Sciatic nerve (tissue), 2 donors: ENCODE measurements at regions of chr20 and their contacts with region 1.

Region 1: GRCh38 chr20:41173161-41173721 is 35.9 kb downstream of the PLCG1 start:
- DNase-seq: peak; percentile 92
- ATAC-seq: peak; percentile 94

Region 2: DNA sequence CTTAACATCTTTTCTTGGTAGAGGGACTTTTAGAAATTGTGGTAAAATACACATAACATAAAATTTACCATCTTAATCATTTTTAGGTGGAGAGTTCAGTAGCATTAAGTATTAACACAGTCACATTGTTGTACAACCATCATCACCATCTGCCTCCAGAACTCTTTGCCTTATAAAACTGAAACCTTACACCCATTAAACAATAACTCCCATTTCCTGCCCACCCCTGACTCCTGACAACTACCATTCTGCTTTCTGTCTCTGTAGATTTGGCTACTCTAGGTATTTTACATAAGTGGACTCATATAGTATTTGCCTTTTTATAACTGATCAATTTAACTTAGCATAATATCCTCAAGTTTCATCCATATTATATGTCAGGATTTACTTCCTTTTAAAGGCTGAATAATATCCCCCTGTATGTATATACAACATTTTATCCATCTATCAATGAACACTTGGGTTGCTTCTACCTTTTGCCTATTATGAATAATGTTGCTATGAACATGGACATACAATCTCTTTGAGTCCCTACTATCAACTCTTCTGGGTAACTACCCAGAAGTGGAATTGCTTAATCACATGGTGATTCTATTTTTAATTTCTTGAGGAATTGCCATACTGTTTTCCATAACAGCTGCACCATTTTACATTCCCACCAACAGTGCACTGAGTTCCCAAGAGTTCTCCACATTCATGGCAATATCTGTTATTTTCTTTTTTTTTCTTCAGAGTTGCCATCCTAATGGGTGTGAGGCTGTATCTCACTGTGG is 55.8 kb after region 1 on chr20:
- intact Hi-C with region 1: loop called (anchors 10 kb)
- DNase-seq: no peak
- ATAC-seq: no peak

Region 3: DNA sequence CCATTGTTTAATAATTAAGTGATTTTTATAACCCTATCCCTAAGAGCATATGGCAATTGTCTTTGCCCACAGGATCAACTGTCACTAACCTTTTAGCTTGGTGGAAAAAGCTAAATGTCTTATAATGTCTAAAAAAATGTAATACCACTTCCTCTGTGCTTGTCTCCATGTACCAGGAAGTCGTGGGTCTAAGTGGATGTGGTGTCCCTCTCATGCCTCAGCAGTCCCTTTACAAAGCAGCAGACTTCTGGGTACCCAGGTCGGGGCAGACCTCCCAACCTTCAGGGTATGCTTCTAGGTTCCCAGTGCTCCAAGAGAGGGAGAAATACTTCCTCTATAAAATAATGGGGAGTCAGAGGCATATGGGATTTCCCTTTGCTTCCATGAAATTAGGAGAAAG is 69.6 kb after region 1 on chr20:
- intact Hi-C with region 1: no loop called
- DNase-seq: no peak
- ATAC-seq: no peak